HCT116 (cell line): ENCODE measurements at regions of chr14 and their contacts with region 1.

Region 1: DNA sequence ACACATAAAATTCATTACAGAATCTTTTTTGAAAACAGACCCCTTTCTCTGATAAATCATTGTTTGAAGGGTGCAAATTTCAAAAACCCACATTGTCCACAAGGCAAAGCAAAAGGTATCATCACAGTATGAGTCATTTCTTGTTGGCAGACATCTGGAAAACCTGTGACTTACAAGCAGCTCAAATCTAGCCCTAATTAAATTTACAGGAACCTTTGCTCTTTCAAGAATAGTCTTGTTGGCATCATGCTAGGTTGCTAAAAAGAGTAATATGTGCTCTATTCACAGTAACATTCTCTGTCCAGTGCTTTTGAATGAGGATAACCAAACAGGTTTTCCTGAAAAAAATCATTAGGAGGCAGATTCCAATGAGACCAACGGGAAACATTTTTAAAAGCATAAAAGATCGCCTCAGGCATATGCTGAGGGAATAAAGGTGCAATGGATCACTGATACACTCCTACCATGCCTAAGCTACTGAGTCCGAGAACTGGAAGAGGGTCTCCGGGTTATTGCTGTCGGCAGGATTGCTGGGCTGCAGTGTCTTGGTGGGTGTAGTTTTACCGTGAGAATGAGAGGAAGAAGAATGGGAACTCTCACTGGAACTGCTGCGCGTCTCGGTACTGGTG is 55.5 kb upstream of the TTC7B start:
- DNase-seq: no peak
- ATAC-seq: peak; percentile 68
- H3K4me3 ChIP-seq: no peak overlapping the region
- H3K27ac ChIP-seq: no peak overlapping the region; the same call in 1 of the 2 replicates
- H3K4me1 ChIP-seq: peaks cover 14 to 19% of the 10 kb centered on the region in 2 experiments
- H3K27me3 ChIP-seq: no peaks in the 10 kb centered on the region
- CTCF ChIP-seq: no peak
- POLR2A ChIP-seq: no peak
- RAD21 ChIP-seq: no peak

Region 2: GRCh38 chr14:90355540-90356518 is 515.9 kb before region 1 on chr14:
- CTCF ChIA-PET with region 1: no interaction called
- POLR2A ChIA-PET with region 1: no interaction called
- RAD21 ChIA-PET with region 1: no interaction called
- intact Hi-C with region 1: no loop called
- DNase-seq: no peak
- ATAC-seq: peak; percentile 47; the same call in 1 of the 2 replicates
- H3K4me3 ChIP-seq: no peak overlapping the region
- H3K27ac ChIP-seq: no peak overlapping the region
- H3K4me1 ChIP-seq: peaks cover 7 to 10% of the 10 kb centered on the region in 2 experiments
- H3K27me3 ChIP-seq: no peaks in the 10 kb centered on the region
- CTCF ChIP-seq: no peak
- POLR2A ChIP-seq: no peak
- RAD21 ChIP-seq: no peak

Region 3: GRCh38 chr14:90883782-90884181 is 12.1 kb after region 1 on chr14:
- CTCF ChIA-PET with region 1: no interaction called
- POLR2A ChIA-PET with region 1: no interaction called
- RAD21 ChIA-PET with region 1: no interaction called
- intact Hi-C with region 1: loop called (anchors 1 kb)
- DNase-seq: no peak
- ATAC-seq: no peak
- H3K4me3 ChIP-seq: no peak overlapping the region
- H3K27ac ChIP-seq: no peak overlapping the region
- H3K4me1 ChIP-seq: no peaks in the 10 kb centered on the region
- H3K27me3 ChIP-seq: no peaks in the 10 kb centered on the region
- CTCF ChIP-seq: no peak
- POLR2A ChIP-seq: no peak
- RAD21 ChIP-seq: no peak